ENCODE measurements at regions of chr9 and their contacts with region 1.

Region 1: DNA sequence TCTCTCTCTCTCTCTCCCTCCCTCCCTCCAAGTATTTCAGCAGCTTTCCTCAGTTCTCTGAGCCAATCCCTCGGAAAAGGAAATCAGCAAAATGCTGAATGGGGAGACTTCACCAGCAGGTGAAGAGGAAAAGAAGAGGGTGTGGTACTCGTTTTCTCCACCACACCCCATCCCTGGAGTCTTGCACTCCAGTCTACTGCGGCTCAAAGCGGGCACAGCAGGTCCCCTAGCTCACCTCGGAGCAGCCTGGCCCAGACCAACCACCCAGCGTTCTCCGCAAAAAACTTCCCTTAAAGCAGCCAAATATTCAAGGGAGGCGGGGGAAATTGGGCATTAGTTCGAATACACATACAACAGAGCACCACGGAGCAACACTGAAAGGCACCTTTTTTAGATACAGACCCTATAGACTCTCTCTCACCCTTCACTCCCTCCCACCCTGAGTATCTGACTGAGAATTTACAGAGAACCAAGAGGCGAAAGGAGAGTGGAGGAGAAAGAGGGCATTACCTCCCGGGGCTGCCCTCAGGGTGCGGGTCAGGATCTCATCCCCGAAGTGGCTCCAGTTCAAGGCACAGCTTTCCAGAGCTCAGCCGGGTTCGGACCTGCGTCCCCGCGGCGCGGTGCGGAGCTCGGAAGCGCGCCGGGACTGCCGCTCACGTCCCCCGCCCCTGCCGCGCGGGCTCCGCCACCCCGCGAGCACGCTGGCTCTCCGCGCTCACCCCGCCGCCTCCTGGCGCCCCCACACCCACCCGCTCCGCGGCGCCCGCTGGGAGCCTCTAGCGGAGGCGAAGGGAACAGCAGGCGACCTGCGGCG is 1638.5 kb upstream of the C9orf72 start:
- DNase-seq: peak; percentile 89
- H3K4me3 ChIP-seq: peak overlapping the region; percentile 92 to 96
- H3K27ac ChIP-seq: peak overlapping the region; percentile 73 to 90; a peak in 3 of 4 replicates
- H3K4me1 ChIP-seq: peaks cover 12 to 23% of the 10 kb centered on the region in 2 experiments; a peak in 3 of 4 replicates
- H3K27me3 ChIP-seq: no peaks in the 10 kb centered on the region
- CTCF ChIP-seq: peak; percentile 66
- EP300 ChIP-seq: no peak
- RAD21 ChIP-seq: peak; percentile 64

Region 2: GRCh38 chr9:28774416-28775235 is 437.2 kb before region 1 on chr9:
- CTCF ChIA-PET with region 1: interaction called, 14 read pairs
- POLR2A ChIA-PET with region 1: no interaction called
- DNase-seq: peak; percentile 34
- H3K4me3 ChIP-seq: no peak overlapping the region; a peak in 1 of 4 replicates
- H3K27ac ChIP-seq: no peak overlapping the region; a peak in 1 of 4 replicates
- H3K4me1 ChIP-seq: peaks cover 0 to 4% of the 10 kb centered on the region in 2 experiments; a peak in 2 of 4 replicates
- H3K27me3 ChIP-seq: no peaks in the 10 kb centered on the region
- CTCF ChIP-seq: peak; percentile 86
- EP300 ChIP-seq: no peak
- RAD21 ChIP-seq: peak; percentile 78

Region 3: GRCh38 chr9:28899926-28900325 is 311.9 kb before region 1 on chr9:
- CTCF ChIA-PET with region 1: no interaction called
- POLR2A ChIA-PET with region 1: no interaction called
- DNase-seq: no peak
- H3K4me3 ChIP-seq: no peak overlapping the region
- H3K27ac ChIP-seq: no peak overlapping the region
- H3K4me1 ChIP-seq: no peaks in the 10 kb centered on the region
- H3K27me3 ChIP-seq: no peaks in the 10 kb centered on the region
- CTCF ChIP-seq: no peak
- EP300 ChIP-seq: no peak
- RAD21 ChIP-seq: no peak

Region 4: GRCh38 chr9:29129763-29130162 is 82.0 kb before region 1 on chr9:
- CTCF ChIA-PET with region 1: no interaction called
- POLR2A ChIA-PET with region 1: no interaction called
- DNase-seq: no peak
- H3K4me3 ChIP-seq: no peak overlapping the region
- H3K27ac ChIP-seq: no peak overlapping the region
- H3K4me1 ChIP-seq: no peaks in the 10 kb centered on the region
- H3K27me3 ChIP-seq: no peaks in the 10 kb centered on the region
- CTCF ChIP-seq: no peak
- EP300 ChIP-seq: no peak
- RAD21 ChIP-seq: no peak

Measured in SK-N-SH (cell line).